ENCODE measurements at regions of chr20 and their contacts with region 1.

Region 1: DNA sequence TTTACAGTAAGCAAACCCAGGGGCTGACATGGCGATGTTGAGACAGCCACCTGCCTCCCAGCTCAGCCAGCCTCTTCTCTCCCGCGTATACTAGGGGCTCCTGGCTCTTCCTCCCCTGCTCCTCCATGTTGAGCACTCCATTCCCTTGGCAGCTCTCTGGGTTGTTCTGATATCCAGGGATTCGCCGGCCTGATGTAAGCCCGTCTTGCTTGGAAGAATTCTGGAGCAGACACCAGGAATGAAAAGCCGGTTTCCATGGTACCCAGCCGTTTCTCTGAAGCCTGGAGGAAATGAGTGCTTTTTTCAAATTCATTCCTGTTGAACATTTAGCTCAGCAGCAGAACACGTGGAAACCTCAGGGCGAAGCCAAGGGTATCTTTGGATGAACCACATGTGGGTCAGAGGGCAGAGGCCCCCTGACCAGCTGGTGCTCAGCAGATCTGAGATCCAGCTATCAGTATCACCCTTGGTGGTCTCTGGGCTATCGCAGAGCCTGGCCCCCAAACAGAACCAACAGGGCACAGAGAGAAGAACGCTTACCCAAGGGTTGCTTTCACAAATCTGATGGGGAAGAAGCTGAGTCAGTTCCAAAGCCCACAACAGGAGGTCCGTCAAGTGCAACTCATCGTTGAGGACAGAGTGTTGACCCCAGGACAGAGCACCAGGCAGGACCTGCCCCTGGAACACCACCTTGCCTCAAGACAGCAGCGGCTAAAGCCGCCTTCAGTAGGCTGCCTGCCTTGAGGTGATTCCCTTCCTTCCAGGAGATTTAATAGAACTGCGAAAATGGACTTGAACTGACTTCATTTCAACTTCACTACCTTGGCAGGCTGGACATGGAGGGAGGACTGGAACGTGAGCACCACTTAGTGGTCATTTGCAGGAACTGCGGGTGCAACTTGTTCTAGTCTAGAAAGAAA is 96.1 kb upstream of the RIN2 start:
- DNase-seq: peak; percentile 28
- ATAC-seq: peak; percentile 38
- H3K4me3 Mint-ChIP-seq: no peak overlapping the region
- H3K27ac Mint-ChIP-seq: no peak overlapping the region
- H3K4me1 Mint-ChIP-seq: peaks cover 32% of the 10 kb centered on the region
- H3K27me3 Mint-ChIP-seq: peaks cover 21% of the 10 kb centered on the region
- CTCF ChIP-seq: peak; percentile 99

Region 2: DNA sequence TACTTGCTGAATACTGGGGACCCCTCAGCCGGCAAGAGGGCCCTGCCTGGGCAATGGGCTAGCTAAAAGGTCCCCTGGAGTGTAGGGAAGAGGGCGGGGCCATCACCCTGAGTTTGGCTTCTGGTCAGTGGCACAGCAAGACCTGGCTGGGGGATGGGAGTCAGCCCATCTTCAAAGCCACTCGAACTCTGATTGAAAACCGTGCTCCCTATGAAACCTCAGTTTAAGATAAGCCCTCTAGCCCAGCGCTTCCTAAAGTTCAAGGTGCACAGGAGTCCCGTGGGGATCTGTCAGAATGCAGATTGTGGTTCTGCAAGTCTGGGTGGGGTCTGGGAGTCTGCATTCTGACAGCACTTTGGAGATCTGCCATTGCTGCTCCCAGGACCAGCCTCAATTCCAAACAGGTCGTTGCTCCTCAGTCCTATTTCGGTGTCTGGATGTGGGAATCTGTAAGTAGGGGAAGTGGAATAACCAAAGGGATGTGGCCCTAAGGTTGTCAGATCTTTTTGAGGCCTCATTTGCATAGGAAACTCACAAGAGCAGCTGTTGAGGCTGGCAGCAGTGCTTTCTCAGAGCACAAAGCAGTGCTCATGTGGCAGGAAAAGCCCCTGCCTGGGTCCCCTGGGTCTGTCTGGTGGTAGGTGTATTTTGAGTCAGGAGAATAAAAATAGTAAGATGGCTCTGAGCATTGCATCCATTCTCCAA is 933.7 kb before region 1 on chr20:
- CTCF ChIA-PET with region 1: no interaction called
- POLR2A ChIA-PET with region 1: no interaction called
- intact Hi-C with region 1: loop called (anchors 10 kb)
- DNase-seq: peak; percentile 40
- ATAC-seq: peak; percentile 96
- H3K4me3 Mint-ChIP-seq: peak overlapping the region; percentile 64
- H3K27ac Mint-ChIP-seq: peak overlapping the region; percentile 70
- H3K4me1 Mint-ChIP-seq: peaks cover 42% of the 10 kb centered on the region
- H3K27me3 Mint-ChIP-seq: no peaks in the 10 kb centered on the region
- CTCF ChIP-seq: no peak

Region 3: DNA sequence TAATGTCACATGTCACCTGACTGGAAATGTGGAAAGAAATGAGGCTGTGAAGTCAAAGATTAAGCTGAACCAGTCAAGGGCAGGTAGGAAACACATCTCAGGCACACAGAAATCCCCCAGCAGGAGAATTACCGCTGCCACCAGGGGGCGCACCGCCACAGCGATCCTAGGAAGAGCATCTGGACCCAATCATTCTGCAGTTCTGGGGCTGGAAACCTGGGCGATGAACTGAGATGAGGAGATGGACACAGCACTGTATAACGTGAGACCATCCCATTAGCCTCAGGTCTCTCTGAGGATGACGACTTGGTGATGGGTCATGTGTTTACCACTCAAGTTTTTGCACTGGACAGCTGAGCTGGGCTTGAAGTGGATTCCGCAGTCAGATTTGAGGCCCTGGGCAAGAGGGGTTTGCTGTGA is 456.0 kb before region 1 on chr20:
- CTCF ChIA-PET with region 1: interaction called, 92 read pairs
- POLR2A ChIA-PET with region 1: no interaction called
- intact Hi-C with region 1: loop called (anchors 1 kb)
- DNase-seq: peak; percentile 57
- ATAC-seq: no peak
- H3K4me3 Mint-ChIP-seq: no peak overlapping the region
- H3K27ac Mint-ChIP-seq: no peak overlapping the region
- H3K4me1 Mint-ChIP-seq: no peaks in the 10 kb centered on the region
- H3K27me3 Mint-ChIP-seq: peaks cover 57% of the 10 kb centered on the region
- CTCF ChIP-seq: peak; percentile 88

Region 4: GRCh38 chr20:19621072-19621471 is 40.9 kb before region 1 on chr20:
- CTCF ChIA-PET with region 1: interaction called, 180 read pairs
- POLR2A ChIA-PET with region 1: no interaction called
- intact Hi-C with region 1: no loop called
- DNase-seq: no peak
- ATAC-seq: no peak
- H3K4me3 Mint-ChIP-seq: no peak overlapping the region
- H3K27ac Mint-ChIP-seq: no peak overlapping the region
- H3K4me1 Mint-ChIP-seq: no peaks in the 10 kb centered on the region
- H3K27me3 Mint-ChIP-seq: peaks cover 28% of the 10 kb centered on the region
- CTCF ChIP-seq: no peak

Region 5: GRCh38 chr20:19628570-19629169 is 33.3 kb before region 1 on chr20:
- CTCF ChIA-PET with region 1: interaction called, 180 read pairs
- POLR2A ChIA-PET with region 1: interaction called, 3 read pairs
- intact Hi-C with region 1: loop called (anchors 1 kb)
- DNase-seq: no peak
- ATAC-seq: peak; percentile 78
- H3K4me3 Mint-ChIP-seq: no peak overlapping the region
- H3K27ac Mint-ChIP-seq: no peak overlapping the region
- H3K4me1 Mint-ChIP-seq: peaks cover 3% of the 10 kb centered on the region
- H3K27me3 Mint-ChIP-seq: peaks cover 8% of the 10 kb centered on the region
- CTCF ChIP-seq: no peak